Activated B cell treated with CpG ODN at 0.5 μM for 24 hours (primary cell): ENCODE measurements at regions of chr17 and their contacts with region 1.

Region 1: DNA sequence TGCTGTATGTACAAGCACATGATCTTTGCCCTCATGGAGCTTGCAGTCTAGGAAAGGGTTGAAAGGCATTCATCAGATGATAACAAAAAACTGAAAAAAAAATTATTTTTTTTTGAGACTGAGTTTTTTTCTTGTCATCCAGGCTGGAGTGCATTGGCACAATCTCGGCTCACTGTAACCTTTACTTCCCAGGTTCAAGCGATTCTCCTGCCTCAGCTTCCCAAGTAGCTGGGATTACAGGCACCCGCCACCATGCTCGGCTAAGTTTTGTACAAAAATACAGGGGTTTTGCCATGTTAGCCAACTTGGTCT is 38.7 kb upstream of the BCAS3 start:
- DNase-seq: no peak
- ATAC-seq: no peak
- H3K4me3 Mint-ChIP-seq: no peak overlapping the region
- H3K27ac Mint-ChIP-seq: no peak overlapping the region
- H3K4me1 Mint-ChIP-seq: peaks cover 7% of the 10 kb centered on the region
- H3K27me3 Mint-ChIP-seq: no peaks in the 10 kb centered on the region
- CTCF ChIP-seq: no peak

Region 2: DNA sequence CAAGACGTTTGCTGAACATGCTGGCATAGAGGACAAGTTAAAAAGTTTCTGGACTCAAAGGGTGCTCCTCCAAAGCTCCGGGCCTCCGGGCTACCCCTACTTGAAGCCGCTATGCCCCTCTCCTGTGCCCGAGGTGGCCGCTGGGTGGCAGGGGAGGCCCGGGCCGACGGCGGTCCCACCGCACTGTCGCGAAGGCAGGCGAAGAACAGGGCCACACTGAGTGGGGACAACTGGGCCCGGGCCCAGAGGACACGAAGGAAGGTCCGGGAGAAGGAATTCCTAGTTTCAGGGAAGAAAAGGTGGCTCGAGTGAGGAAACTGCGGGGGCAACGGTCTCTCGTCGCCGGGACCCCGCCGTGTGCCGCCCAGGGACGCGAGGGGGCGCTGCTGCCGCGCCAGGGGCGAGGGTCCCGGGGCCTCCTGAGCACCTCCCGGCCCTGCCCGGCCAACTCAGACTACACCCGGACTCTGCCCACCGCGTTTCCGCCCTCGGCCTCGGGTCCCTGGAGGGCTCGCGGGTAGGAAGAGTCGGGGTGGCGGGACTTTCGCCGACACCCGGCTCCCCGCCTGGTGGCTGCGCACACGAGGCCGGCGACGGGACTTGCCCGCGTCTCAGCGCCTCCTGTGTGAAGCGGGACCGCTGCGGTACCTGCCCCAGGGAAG is 217.6 kb before region 1 on chr17:
- CTCF ChIA-PET with region 1: no interaction called
- POLR2A ChIA-PET with region 1: no interaction called
- intact Hi-C with region 1: loop called (anchors 1 kb)
- DNase-seq: peak; percentile 79
- ATAC-seq: peak; percentile 93
- H3K4me3 Mint-ChIP-seq: peak overlapping the region; percentile 85
- H3K27ac Mint-ChIP-seq: peak overlapping the region; percentile 74
- H3K4me1 Mint-ChIP-seq: peaks cover 8% of the 10 kb centered on the region
- H3K27me3 Mint-ChIP-seq: no peaks in the 10 kb centered on the region
- CTCF ChIP-seq: peak; percentile 100

Region 3: DNA sequence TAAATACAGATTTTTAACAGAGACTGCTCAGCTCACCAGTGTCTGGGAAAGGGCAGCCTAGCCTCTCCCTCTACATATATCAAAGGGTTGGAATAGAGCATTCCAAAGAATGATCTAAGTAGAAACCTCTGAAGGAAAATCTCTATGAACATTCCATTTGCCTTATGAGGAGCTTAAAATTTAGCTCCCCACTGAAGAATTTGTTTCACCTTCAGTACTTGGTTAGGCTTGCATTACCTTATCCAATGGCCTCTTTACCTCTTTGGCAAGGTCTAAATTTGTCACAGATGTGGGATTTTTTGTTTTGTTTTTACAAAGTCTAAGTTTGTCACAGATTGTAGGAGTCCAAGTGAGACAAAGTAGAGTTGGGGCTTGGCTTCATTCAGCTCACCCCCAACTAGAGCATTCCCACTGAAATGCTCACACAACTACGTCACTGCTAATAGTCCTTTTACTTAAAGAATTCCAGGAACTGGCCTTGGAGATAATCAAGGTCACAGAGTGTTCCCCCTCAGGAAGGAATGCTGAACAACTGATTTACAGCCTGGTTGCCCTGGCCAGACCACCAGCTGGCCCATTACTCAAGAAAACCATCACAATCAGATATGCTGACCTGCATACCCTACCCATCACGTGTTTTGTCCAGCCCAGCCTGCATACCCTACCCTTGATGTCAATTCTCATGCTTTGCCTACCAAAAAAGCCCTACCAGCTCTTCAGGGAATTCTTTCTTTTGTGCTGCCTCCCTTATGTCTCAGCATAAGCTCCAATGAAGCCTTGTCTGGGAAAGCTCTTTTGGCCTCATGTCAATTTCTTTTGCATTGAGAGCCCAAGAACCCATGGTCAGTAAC is 65.5 kb before region 1 on chr17:
- CTCF ChIA-PET with region 1: interaction called, 6 read pairs
- POLR2A ChIA-PET with region 1: no interaction called
- intact Hi-C with region 1: loop called (anchors 2 kb)
- DNase-seq: no peak
- ATAC-seq: no peak
- H3K4me3 Mint-ChIP-seq: no peak overlapping the region
- H3K27ac Mint-ChIP-seq: no peak overlapping the region
- H3K4me1 Mint-ChIP-seq: peaks cover 6% of the 10 kb centered on the region
- H3K27me3 Mint-ChIP-seq: peaks cover 2% of the 10 kb centered on the region
- CTCF ChIP-seq: no peak